ENCODE measurements at regions of chr1 and their contacts with region 1.

Region 1: GRCh38 chr1:228804671-228805413 is 69.6 kb downstream of the RHOU start:
- DNase-seq: peak; percentile 83
- ATAC-seq: peak; percentile 92
- H3K4me3 Mint-ChIP-seq: peak overlapping the region; percentile 59
- H3K27ac Mint-ChIP-seq: peak overlapping the region; percentile 93
- H3K4me1 Mint-ChIP-seq: peaks cover 86% of the 10 kb centered on the region
- H3K27me3 Mint-ChIP-seq: no peaks in the 10 kb centered on the region

Region 2: GRCh38 chr1:228794173-228794572 is 10.7 kb before region 1 on chr1:
- CTCF ChIA-PET with region 1: interaction called, 49 read pairs
- POLR2A ChIA-PET with region 1: interaction called, 18 read pairs
- DNase-seq: peak; percentile 66
- ATAC-seq: peak; percentile 76
- H3K4me3 Mint-ChIP-seq: no peak overlapping the region
- H3K27ac Mint-ChIP-seq: no peak overlapping the region
- H3K4me1 Mint-ChIP-seq: peaks cover 36% of the 10 kb centered on the region
- H3K27me3 Mint-ChIP-seq: no peaks in the 10 kb centered on the region

Region 3: DNA sequence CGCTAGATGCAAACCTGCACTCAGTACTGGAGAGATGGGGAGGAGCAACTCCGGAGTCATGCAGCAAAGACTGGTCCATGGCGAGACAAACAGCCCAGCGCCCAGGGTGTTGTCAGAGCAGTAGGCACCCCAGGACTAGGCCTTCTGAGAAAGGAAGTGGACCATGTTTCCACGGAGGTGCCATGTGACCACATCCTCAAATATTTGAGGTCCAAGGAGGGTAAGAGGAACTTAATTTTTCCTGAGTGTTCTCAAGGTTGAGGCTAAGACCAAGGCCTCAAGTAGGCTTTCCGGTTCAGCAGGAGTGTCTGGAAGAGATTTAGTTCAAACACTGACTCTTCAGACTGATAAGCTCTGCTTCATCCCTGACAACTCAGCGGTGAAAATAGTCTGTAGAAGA is 116.6 kb after region 1 on chr1:
- CTCF ChIA-PET with region 1: no interaction called
- POLR2A ChIA-PET with region 1: no interaction called
- DNase-seq: no peak
- ATAC-seq: peak; percentile 27
- H3K4me3 Mint-ChIP-seq: no peak overlapping the region
- H3K27ac Mint-ChIP-seq: no peak overlapping the region
- H3K4me1 Mint-ChIP-seq: peaks cover 27% of the 10 kb centered on the region
- H3K27me3 Mint-ChIP-seq: no peaks in the 10 kb centered on the region